Right ventricle myocardium inferior (tissue), 1 donor: ENCODE measurements at regions of chr11 and their contacts with region 1.

Region 1: GRCh38 chr11:16097543-16097942 is 258.8 kb downstream of the SOX6 start:
- DNase-seq: no peak
- ATAC-seq: no peak

Region 2: GRCh38 chr11:16111690-16112089 is 14.1 kb after region 1 on chr11:
- intact Hi-C with region 1: loop called (anchors 1 kb)
- DNase-seq: no peak
- ATAC-seq: no peak